ENCODE measurements at regions of chr5 and their contacts with region 1.

Region 1: DNA sequence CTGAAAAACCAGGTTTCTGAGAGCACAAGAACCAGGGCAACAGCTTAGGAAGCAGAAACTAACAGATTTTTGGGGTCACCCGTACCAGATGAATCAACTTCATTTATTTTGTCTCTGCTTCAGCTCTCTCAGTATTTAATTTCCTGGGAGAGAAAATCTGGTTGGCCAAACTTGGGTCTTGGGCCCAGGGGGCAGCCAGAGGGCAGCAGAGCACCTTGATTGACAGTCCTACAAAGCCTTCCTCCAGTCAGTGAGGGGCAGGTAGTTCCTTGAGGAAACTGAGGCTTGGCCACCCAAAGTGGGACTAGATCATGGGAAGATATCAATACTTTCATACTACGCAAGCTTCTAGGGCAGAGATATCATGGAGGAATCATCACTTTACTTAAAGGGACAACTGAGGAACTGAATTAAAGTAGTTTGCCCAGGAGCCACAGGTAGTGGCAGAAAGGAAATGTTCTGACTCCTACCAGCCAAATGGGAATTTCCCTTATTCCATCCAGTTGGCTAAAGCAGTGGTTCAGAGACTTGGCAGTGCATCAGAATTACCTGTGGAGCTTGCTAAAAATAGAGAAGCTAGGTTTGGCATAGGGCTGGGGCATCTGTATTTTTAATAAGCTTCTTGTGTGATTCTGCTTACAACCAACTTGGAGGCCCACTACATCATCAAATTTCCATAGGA is 21.5 kb upstream of the ARHGAP26 start:
- DNase-seq: no peak
- CTCF ChIP-seq: peak; percentile 61

Region 2: DNA sequence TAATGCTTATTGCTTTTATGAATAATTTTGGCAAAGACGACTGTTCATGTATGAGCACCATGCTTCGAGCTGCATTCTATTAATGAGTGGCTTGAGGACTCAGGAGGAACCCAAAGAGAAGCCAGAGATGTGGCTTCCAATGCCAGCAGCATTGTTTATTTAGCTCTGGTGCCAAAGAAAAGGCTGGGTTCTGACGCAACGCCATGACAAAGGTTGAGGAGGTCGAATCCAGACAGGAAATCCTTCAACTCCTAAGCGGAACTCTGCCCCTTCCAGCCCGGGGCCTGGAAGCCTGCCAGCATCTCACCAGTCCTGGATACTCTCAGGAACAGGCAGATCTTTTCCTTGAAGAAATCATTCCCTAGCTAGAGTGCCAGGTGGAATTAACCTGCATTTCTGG is 125.8 kb after region 1 on chr5:
- in situ Hi-C with region 1: loop called (anchors 25 kb)
- DNase-seq: no peak
- CTCF ChIP-seq: no peak